ENCODE measurements at regions of chr9 and their contacts with region 1.

Region 1: DNA sequence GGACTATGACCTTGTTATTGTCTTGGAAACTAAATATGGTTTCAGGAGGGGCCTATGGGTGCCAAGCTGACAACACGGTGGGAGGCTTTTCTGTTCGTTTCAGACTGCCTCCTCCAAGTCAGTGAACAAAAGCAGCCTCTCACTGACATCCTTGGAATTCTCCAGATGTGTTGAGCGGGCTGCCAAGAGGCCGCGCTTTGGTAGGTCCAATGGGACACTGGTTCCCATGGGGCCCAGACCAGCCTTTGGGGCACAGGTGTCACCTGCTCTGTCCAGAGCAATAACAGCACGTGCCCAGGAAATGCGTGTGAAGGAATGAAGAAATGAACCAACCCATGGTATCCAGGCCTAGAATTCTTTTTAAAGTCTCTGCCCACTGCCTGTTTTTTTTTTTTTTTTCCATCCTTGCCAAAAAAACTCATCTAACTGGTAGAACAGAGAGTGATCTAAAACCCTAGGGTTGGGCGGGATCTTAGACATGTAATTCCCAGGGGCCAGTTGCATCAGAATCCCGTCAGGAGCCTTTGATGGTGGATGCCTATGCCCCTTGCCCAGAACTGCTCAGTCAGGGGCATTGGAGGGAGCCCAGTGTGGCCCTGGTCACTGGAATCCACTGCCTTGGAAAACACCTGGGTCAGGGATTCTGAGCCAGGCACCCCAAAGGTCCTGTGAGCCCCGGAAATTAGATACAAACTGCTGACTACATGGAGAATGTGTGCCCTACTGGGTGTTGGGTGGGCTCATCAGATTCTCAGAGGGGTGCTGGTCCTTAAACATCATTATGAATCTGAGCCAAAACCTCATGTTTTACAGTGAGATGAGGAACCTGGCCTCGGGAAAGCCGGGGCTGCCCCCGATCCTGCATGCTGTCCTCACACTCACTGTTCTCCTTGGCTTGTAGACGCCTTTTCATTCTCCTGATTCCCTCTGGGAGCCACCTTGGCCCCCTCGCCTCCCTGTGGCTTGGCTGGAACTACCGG is 60.1 kb downstream of the GTF3C4 start:
- DNase-seq: no peak
- ATAC-seq: no peak
- H3K4me3 ChIP-seq: no peak overlapping the region
- H3K27ac ChIP-seq: no peak overlapping the region
- H3K4me1 ChIP-seq: no peaks in the 10 kb centered on the region
- H3K27me3 ChIP-seq: no peaks in the 10 kb centered on the region
- CTCF ChIP-seq: no peak

Region 2: GRCh38 chr9:132018957-132019405 is 711.4 kb before region 1 on chr9:
- CTCF ChIA-PET with region 1: no interaction called
- POLR2A ChIA-PET with region 1: no interaction called
- in situ Hi-C with region 1: no loop called
- intact Hi-C with region 1: no loop called
- DNase-seq: no peak
- ATAC-seq: peak; percentile 53; the same call in 1 of the 2 replicates
- H3K4me3 ChIP-seq: no peak overlapping the region
- H3K27ac ChIP-seq: no peak overlapping the region
- H3K4me1 ChIP-seq: peaks cover 10% of the 10 kb centered on the region
- H3K27me3 ChIP-seq: no peaks in the 10 kb centered on the region
- CTCF ChIP-seq: 0 out of 2 replicates have a peak, but pooled peaks have one; percentile 13

Region 3: DNA sequence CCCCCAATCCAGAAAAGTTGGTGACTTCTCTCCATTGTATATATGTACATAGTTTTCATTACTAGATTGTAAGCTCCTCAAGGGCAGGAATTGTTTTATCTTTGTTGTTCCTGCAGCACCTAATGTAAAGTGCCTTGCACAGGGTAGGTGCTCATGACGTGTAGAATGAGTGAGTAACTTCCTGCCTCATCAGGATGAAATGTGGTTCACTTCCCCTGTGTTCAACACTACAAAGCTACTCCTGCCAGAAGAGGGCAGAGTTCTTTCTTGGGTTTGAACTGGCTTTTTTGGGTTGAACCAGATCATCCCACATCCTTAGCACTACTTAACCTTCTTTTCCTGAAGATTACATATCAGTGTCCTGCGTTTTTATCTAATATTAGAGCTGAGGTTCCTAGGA is 36.2 kb before region 1 on chr9:
- CTCF ChIA-PET with region 1: no interaction called
- POLR2A ChIA-PET with region 1: interaction called, 12 read pairs
- in situ Hi-C with region 1: no loop called
- intact Hi-C with region 1: no loop called
- DNase-seq: no peak
- ATAC-seq: no peak
- H3K4me3 ChIP-seq: no peak overlapping the region
- H3K27ac ChIP-seq: no peak overlapping the region
- H3K4me1 ChIP-seq: no peaks in the 10 kb centered on the region
- H3K27me3 ChIP-seq: no peaks in the 10 kb centered on the region
- CTCF ChIP-seq: peak; percentile 5; the same call in 1 of the 2 replicates

Region 4: GRCh38 chr9:132708769-132709168 is 21.6 kb before region 1 on chr9:
- CTCF ChIA-PET with region 1: no interaction called
- POLR2A ChIA-PET with region 1: no interaction called
- in situ Hi-C with region 1: no loop called
- intact Hi-C with region 1: no loop called
- DNase-seq: no peak
- ATAC-seq: no peak
- H3K4me3 ChIP-seq: no peak overlapping the region
- H3K27ac ChIP-seq: no peak overlapping the region
- H3K4me1 ChIP-seq: no peaks in the 10 kb centered on the region
- H3K27me3 ChIP-seq: no peaks in the 10 kb centered on the region
- CTCF ChIP-seq: no peak

Region 5: DNA sequence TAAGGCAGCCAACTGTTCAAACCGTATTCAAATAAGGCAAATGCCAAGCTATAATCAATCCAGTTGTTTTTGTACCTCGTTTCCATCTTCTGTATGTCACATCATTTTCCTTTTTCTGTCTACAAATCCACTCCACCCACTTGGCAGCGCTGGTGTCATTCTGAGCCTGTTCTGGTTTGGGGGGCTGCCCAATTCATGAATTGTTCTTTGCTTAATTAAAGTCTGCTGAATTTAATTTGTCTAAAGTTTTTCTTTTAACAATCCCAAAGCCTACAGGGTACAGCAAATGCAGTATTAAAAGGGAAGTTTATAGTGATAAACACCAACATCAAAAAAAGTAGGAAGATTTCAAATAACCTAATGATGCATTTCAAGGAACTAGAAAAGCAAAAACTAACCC is 33.2 kb after region 1 on chr9:
- CTCF ChIA-PET with region 1: no interaction called
- POLR2A ChIA-PET with region 1: interaction called, 11 read pairs
- in situ Hi-C with region 1: no loop called
- intact Hi-C with region 1: no loop called
- DNase-seq: no peak
- ATAC-seq: no peak
- H3K4me3 ChIP-seq: no peak overlapping the region
- H3K27ac ChIP-seq: no peak overlapping the region
- H3K4me1 ChIP-seq: no peaks in the 10 kb centered on the region
- H3K27me3 ChIP-seq: no peaks in the 10 kb centered on the region
- CTCF ChIP-seq: no peak

Measured in Panc1 (cell line).